OCI-LY7 (cell line): ENCODE measurements at regions of chr1 and their contacts with region 1.

Region 1: GRCh38 chr1:43974443-43975248 is at the start of gene ATP6V0B:
- DNase-seq: peak; percentile 94
- H3K4me3 ChIP-seq: peak within 1 kb of the TSS; percentile 94
- H3K27ac ChIP-seq: peak within 1 kb of the TSS; percentile 46
- H3K4me1 ChIP-seq: peaks cover 24% of the 10 kb centered on the region
- CTCF ChIP-seq: no peak
- total RNA-seq, gene ATP6V0B: 62.0 and 97.1 TPM in 2 replicates

Region 2: GRCh38 chr1:43946236-43947060 is 28.2 kb before region 1 on chr1 and contains the start of gene IPO13:
- CTCF ChIA-PET with region 1: no interaction called
- POLR2A ChIA-PET with region 1: interaction called, 4 read pairs
- intact Hi-C with region 1: loop called (anchors 1 kb)
- DNase-seq: peak; percentile 97
- H3K4me3 ChIP-seq: peak within 1 kb of the TSS; percentile 76
- H3K27ac ChIP-seq: peak within 1 kb of the TSS; percentile 56
- H3K4me1 ChIP-seq: peaks cover 22% of the 10 kb centered on the region
- CTCF ChIP-seq: peak; percentile 84
- total RNA-seq, gene IPO13: 13.1 and 17.8 TPM in 2 replicates

Region 3: GRCh38 chr1:43991476-43992231 is 17.0 kb after region 1 on chr1 and contains the start of gene CCDC24:
- CTCF ChIA-PET with region 1: interaction called, 3 read pairs
- POLR2A ChIA-PET with region 1: interaction called, 4 read pairs
- intact Hi-C with region 1: loop called (anchors 2 kb)
- DNase-seq: peak; percentile 71
- H3K4me3 ChIP-seq: peak within 1 kb of the TSS; percentile 71
- H3K27ac ChIP-seq: no peak within 1 kb of the TSS
- H3K4me1 ChIP-seq: peaks cover 28% of the 10 kb centered on the region
- CTCF ChIP-seq: no peak
- total RNA-seq, gene CCDC24: 1.9 and 8.9 TPM in 2 replicates